Heart left ventricle (tissue), 16 donors: ENCODE measurements at regions of chr3 and their contacts with region 1.

Region 1: GRCh38 chr3:38004415-38005076 is 14.0 kb downstream of the VILL start:
- DNase-seq: peak in 4 of 5 donors; percentile 64 to 87 (median 77)
- ATAC-seq: peak; percentile 62 to 76 (median 67)
- H3K4me3 ChIP-seq: peak overlapping the region in 7 of 12 donors; percentile 20 to 57 (median 46)
- H3K27ac ChIP-seq: peak overlapping the region in 11 of 12 donors; percentile 1 to 86 (median 62)
- H3K4me1 ChIP-seq: peaks cover 0 to 20% (median 9%) of the 10 kb centered on the region in 12 donors
- H3K27me3 ChIP-seq: no peaks in the 10 kb centered on the region
- CTCF ChIP-seq: peak; percentile 50 to 74 (median 67)
- POLR2A ChIP-seq: no peak

Region 2: GRCh38 chr3:37580237-37580636 is 424.3 kb before region 1 on chr3:
- intact Hi-C with region 1: no loop called
- DNase-seq: peak in 2 of 5 donors; percentile 39 to 40
- ATAC-seq: peak; percentile 53 to 90 (median 86)
- H3K4me3 ChIP-seq: no peak overlapping the region
- H3K27ac ChIP-seq: peak overlapping the region in 5 of 12 donors; percentile 15 to 60 (median 25)
- H3K4me1 ChIP-seq: peaks cover 0 to 34% (median 15%) of the 10 kb centered on the region in 12 donors
- H3K27me3 ChIP-seq: no peaks in the 10 kb centered on the region
- CTCF ChIP-seq: no peak
- POLR2A ChIP-seq: no peak

Region 3: DNA sequence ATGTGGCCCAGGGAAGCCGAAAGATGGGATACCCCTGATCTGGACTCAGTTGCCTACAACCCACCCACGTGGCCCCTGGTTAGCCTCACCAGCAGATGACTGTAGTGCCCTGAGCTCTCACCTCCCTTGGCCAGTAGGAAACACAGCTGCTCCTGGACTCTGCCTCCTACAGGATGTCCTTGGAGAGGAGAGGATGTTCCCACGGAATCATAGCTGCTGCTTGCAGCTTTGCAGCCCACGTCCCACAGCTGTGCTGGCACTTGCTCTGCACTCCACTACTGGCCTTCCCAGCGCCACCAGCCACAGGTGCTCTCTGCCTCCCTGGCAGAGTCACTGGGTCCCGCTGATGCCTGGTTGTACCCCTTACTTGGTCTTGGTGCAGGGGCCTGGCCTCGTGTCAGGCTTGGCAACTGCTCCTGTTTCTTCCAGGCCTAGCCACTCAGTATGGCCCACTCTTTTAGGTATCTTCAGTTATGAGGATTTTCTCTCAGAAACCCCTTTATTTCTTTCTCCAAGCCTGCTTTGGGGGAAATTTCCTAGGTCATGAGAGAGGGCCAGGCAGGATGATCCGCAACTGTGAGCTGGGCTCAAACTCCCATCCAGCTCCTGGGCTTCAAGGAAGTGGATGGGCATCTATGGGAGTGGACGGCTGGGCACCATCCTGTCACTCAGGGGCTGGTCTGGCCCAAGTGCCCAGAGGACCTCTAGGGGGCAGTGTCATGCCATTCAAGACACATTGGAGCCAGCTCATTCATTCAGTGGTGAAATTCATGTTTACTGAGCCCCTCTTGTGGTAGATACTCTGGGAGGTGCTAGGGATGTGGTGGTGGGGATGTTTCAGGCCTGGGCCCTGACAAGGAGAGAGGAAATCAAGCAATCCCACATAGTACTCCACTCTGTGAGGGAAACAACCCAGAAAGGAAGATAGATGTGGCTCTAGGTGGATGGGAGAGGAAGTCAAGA is 30.1 kb before region 1 on chr3:
- intact Hi-C with region 1: loop called in 1 of 10 experiments (anchors 2 kb)
- DNase-seq: peak in 4 of 5 donors; percentile 59 to 73 (median 60)
- ATAC-seq: peak; percentile 45 to 90 (median 82)
- H3K4me3 ChIP-seq: no peak overlapping the region
- H3K27ac ChIP-seq: peak overlapping the region in 5 of 12 donors; percentile 29 to 62 (median 49)
- H3K4me1 ChIP-seq: peaks cover 0 to 23% (median 10%) of the 10 kb centered on the region in 12 donors
- H3K27me3 ChIP-seq: no peaks in the 10 kb centered on the region
- CTCF ChIP-seq: peak; percentile 69 to 85 (median 77)
- POLR2A ChIP-seq: no peak

Region 4: DNA sequence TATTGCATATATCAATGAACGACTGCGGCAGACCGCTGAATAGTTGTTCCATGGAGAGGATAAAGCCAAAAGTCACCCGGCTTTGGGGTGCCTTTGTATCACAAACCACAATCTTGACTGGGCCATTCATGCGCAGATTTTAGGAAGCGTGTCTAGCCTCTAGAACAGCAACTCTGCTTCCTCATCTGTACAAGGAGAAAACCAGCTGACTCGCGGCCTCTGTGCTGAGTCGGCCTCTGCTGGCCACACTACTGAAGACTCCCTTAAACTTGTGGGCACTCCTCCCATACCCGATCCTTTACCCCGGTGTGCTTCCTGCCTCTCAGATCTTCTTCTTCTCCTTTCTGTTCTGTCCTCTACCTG is 35.3 kb after region 1 on chr3:
- intact Hi-C with region 1: loop called in 1 of 10 experiments (anchors 2 kb)
- DNase-seq: peak in 4 of 5 donors; percentile 59 to 81 (median 68)
- ATAC-seq: peak; percentile 66 to 92 (median 90)
- H3K4me3 ChIP-seq: peak overlapping the region in 11 of 12 donors; percentile 18 to 65 (median 55)
- H3K27ac ChIP-seq: peak overlapping the region in 2 of 12 donors; percentile 14 to 73
- H3K4me1 ChIP-seq: peaks cover 0 to 22% (median 9%) of the 10 kb centered on the region in 12 donors
- H3K27me3 ChIP-seq: peaks cover 0 to 7% (median 0%) of the 10 kb centered on the region in 9 donors
- CTCF ChIP-seq: peak in 7 of 12 donors; percentile 19 to 54 (median 32)
- POLR2A ChIP-seq: no peak

Region 5: GRCh38 chr3:38117748-38118420 is 113.3 kb after region 1 on chr3:
- intact Hi-C with region 1: loop called in 1 of 10 experiments (anchors 10 kb)
- DNase-seq: peak in 3 of 5 donors; percentile 61 to 73 (median 69)
- ATAC-seq: peak; percentile 62 to 79 (median 72)
- H3K4me3 ChIP-seq: no peak overlapping the region
- H3K27ac ChIP-seq: no peak overlapping the region
- H3K4me1 ChIP-seq: peaks cover 0 to 12% (median 0%) of the 10 kb centered on the region in 12 donors
- H3K27me3 ChIP-seq: no peaks in the 10 kb centered on the region
- CTCF ChIP-seq: peak; percentile 47 to 79 (median 60)
- POLR2A ChIP-seq: no peak

Region 6: GRCh38 chr3:38313695-38314094 is 309.1 kb after region 1 on chr3:
- intact Hi-C with region 1: no loop called
- DNase-seq: no peak
- ATAC-seq: no peak
- H3K4me3 ChIP-seq: no peak overlapping the region
- H3K27ac ChIP-seq: no peak overlapping the region
- H3K4me1 ChIP-seq: peaks cover 0 to 4% (median 0%) of the 10 kb centered on the region in 12 donors
- H3K27me3 ChIP-seq: no peaks in the 10 kb centered on the region
- CTCF ChIP-seq: no peak
- POLR2A ChIP-seq: no peak